HepG2 (cell line): ENCODE measurements at regions of chr6 and their contacts with region 1.

Region 1: DNA sequence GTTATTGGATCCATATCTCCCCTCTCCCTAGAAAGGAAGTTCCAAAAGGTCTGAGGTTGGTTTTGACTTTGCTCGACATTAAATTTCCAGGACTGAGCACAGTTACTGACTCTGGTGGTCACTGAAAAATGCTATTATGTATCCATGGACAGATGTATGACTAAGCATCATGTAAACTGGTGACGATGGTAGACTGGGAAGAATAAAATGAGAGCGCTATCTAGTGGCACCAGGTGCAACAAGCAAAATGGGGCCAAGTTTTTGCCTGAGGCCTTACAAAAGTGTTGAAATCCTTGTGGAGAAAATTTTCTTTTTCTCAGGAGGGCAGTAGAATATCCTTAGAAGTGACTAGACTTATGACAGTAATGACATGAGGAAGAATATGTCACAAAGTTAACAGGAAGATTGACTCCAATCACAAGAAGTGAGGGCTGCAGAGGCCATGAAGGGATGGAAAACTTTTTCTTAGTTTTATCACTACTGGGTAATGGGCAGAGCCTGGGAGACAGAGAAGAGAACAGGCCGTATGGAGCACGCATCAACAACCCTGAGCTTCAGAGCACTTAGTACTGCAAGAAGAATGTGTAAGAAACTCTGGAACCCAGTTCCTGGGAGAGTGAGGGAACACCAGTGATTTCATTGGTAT is 88.9 kb upstream of the ELOVL5 start:
- DNase-seq: peak; percentile 71
- ATAC-seq: peak; percentile 79
- H3K4me3 ChIP-seq: no peak overlapping the region
- H3K27ac ChIP-seq: no peak overlapping the region
- H3K4me1 ChIP-seq: peaks cover 27% of the 10 kb centered on the region
- H3K27me3 ChIP-seq: 0 out of 5 replicates have a peak, but pooled peaks cover 0 to 5% of the 10 kb centered on the region in 2 experiments
- CTCF ChIP-seq: peak; percentile 88
- EP300 ChIP-seq: no peak
- POLR2A ChIP-seq: no peak
- RAD21 ChIP-seq: peak; percentile 90

Region 2: GRCh38 chr6:53410508-53411258 is 27.0 kb before region 1 on chr6:
- CTCF ChIA-PET with region 1: interaction called, 10 read pairs
- POLR2A ChIA-PET with region 1: no interaction called
- in situ Hi-C with region 1: no loop called
- intact Hi-C with region 1: loop called (anchors 1 kb)
- DNase-seq: peak; percentile 56
- ATAC-seq: peak; percentile 100
- H3K4me3 ChIP-seq: no peak overlapping the region
- H3K27ac ChIP-seq: no peak overlapping the region
- H3K4me1 ChIP-seq: peaks cover 4% of the 10 kb centered on the region; the same call in 1 of the 2 replicates
- H3K27me3 ChIP-seq: peaks cover 0 to 4% of the 10 kb centered on the region in 2 experiments; a peak in 1 of 5 replicates
- CTCF ChIP-seq: peak; percentile 96
- EP300 ChIP-seq: no peak
- POLR2A ChIP-seq: no peak
- RAD21 ChIP-seq: peak; percentile 94